Naive thymus-derived CD4-positive, alpha-beta T cell (primary cell): ENCODE measurements at regions of chr3 and their contacts with region 1.

Region 1: GRCh38 chr3:113745273-113746068 is 578 bp downstream of the NAA50 start:
- DNase-seq: peak; percentile 59 to 89 (median 83)
- ATAC-seq: peak; percentile 81
- H3K4me3 ChIP-seq: peak overlapping the region; percentile 90
- H3K4me3 Mint-ChIP-seq: peak overlapping the region; percentile 92 to 100 (median 96)
- H3K27ac ChIP-seq: peak overlapping the region; percentile 99
- H3K27ac Mint-ChIP-seq: peak overlapping the region; percentile 96 to 100 (median 100)
- H3K4me1 ChIP-seq: peaks cover 25 to 43% of the 10 kb centered on the region in 2 donors
- H3K4me1 Mint-ChIP-seq: peaks cover 47 to 81% (median 72%) of the 10 kb centered on the region in 7 donors
- H3K27me3 ChIP-seq: no peaks in the 10 kb centered on the region
- H3K27me3 Mint-ChIP-seq: no peaks in the 10 kb centered on the region

Region 2: GRCh38 chr3:112555535-112556170 is 1189.8 kb before region 1 on chr3:
- CTCF ChIA-PET with region 1: no interaction called
- POLR2A ChIA-PET with region 1: no interaction called
- intact Hi-C with region 1: no loop called
- DNase-seq: no peak
- ATAC-seq: peak; percentile 54
- H3K4me3 ChIP-seq: no peak overlapping the region
- H3K4me3 Mint-ChIP-seq: peak overlapping the region in 4 of 10 donors; percentile 0 to 41 (median 16)
- H3K27ac ChIP-seq: no peak overlapping the region
- H3K27ac Mint-ChIP-seq: peak overlapping the region in 3 of 9 donors; percentile 32 to 52 (median 44)
- H3K4me1 ChIP-seq: peaks cover 8 to 13% of the 10 kb centered on the region in 2 donors
- H3K4me1 Mint-ChIP-seq: peaks cover 39 to 75% (median 68%) of the 10 kb centered on the region in 7 donors
- H3K27me3 ChIP-seq: no peaks in the 10 kb centered on the region
- H3K27me3 Mint-ChIP-seq: no peaks in the 10 kb centered on the region

Region 3: GRCh38 chr3:113051302-113051711 is 694.2 kb before region 1 on chr3:
- CTCF ChIA-PET with region 1: no interaction called
- POLR2A ChIA-PET with region 1: no interaction called
- intact Hi-C with region 1: loop called (anchors 1 kb)
- DNase-seq: peak; percentile 65 to 86 (median 77)
- ATAC-seq: peak; percentile 99
- H3K4me3 ChIP-seq: no peak overlapping the region
- H3K4me3 Mint-ChIP-seq: no peak overlapping the region
- H3K27ac ChIP-seq: no peak overlapping the region
- H3K27ac Mint-ChIP-seq: no peak overlapping the region
- H3K4me1 ChIP-seq: peaks cover 0 to 4% of the 10 kb centered on the region in 2 donors
- H3K4me1 Mint-ChIP-seq: peaks cover 0 to 18% (median 14%) of the 10 kb centered on the region in 7 donors
- H3K27me3 ChIP-seq: no peaks in the 10 kb centered on the region
- H3K27me3 Mint-ChIP-seq: no peaks in the 10 kb centered on the region

Region 4: GRCh38 chr3:113531826-113532697 is 213.4 kb before region 1 on chr3 and contains the start of gene SIDT1:
- CTCF ChIA-PET with region 1: interaction called, 3 read pairs
- POLR2A ChIA-PET with region 1: interaction called, 9 read pairs
- intact Hi-C with region 1: loop called (anchors 1 kb)
- DNase-seq: peak; percentile 31 to 87 (median 78)
- ATAC-seq: peak; percentile 87
- H3K4me3 ChIP-seq: peak within 1 kb of the TSS; percentile 96
- H3K4me3 Mint-ChIP-seq: peak within 1 kb of the TSS; percentile 92 to 100 (median 98)
- H3K27ac ChIP-seq: peak within 1 kb of the TSS; percentile 95
- H3K27ac Mint-ChIP-seq: peak within 1 kb of the TSS; percentile 97 to 100 (median 99)
- H3K4me1 ChIP-seq: peaks cover 28 to 40% of the 10 kb centered on the region in 2 donors
- H3K4me1 Mint-ChIP-seq: peaks cover 33 to 69% (median 57%) of the 10 kb centered on the region in 7 donors
- H3K27me3 ChIP-seq: no peaks in the 10 kb centered on the region
- H3K27me3 Mint-ChIP-seq: peaks cover 0 to 16% (median 0%) of the 10 kb centered on the region in 5 donors
- total RNA-seq, gene SIDT1: 32.1 to 65.7 (median 60.7) TPM

Region 5: DNA sequence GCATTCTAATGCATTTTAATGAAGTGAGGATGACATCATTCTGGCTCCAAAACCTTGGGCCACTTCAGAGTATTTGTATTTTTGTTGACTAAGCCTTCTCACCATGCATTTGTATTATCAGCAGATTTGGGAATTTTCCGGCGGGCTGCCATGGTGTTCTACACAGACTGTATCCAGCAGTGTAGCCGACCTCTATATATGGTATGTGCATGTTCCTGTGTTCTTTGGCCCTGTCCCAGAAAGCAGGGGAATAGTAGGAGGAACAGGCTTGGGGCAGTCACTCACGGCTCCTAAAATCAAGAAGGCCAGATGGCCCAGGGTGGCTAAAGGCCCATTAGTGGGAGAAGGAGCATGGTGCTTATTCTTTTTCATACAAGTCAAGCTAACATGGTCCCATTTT is 129.5 kb before region 1 on chr3:
- CTCF ChIA-PET with region 1: no interaction called
- POLR2A ChIA-PET with region 1: no interaction called
- intact Hi-C with region 1: no loop called
- DNase-seq: no peak
- ATAC-seq: no peak
- H3K4me3 ChIP-seq: no peak overlapping the region
- H3K4me3 Mint-ChIP-seq: no peak overlapping the region
- H3K27ac ChIP-seq: no peak overlapping the region
- H3K27ac Mint-ChIP-seq: no peak overlapping the region
- H3K4me1 ChIP-seq: no peaks in the 10 kb centered on the region
- H3K4me1 Mint-ChIP-seq: peaks cover 0 to 2% (median 0%) of the 10 kb centered on the region in 7 donors
- H3K27me3 ChIP-seq: no peaks in the 10 kb centered on the region
- H3K27me3 Mint-ChIP-seq: no peaks in the 10 kb centered on the region

Region 6: DNA sequence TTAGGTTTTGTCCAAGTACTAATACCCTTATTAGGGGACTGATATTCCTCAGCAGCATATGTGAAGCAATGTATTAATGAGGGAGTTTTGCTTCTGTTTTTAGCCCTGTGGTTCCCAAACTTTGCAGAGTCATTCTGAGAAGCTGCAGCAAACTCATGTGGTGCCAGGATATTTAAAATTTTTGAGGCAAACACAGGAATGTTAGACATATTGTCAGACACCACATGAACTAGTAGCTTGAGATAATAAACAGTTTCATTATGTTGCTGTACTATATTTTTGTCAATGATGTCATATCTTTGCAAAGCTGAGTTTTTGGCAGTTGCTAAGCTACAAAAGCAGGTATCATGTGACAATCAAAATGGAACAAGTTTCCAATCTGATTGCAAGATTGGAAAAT is 38.0 kb after region 1 on chr3:
- CTCF ChIA-PET with region 1: no interaction called
- POLR2A ChIA-PET with region 1: interaction called, 3 read pairs
- intact Hi-C with region 1: loop called (anchors 1 to 5 kb)
- DNase-seq: peak in 1 of 9 donors; percentile 3
- ATAC-seq: peak; percentile 27
- H3K4me3 ChIP-seq: no peak overlapping the region
- H3K4me3 Mint-ChIP-seq: no peak overlapping the region
- H3K27ac ChIP-seq: no peak overlapping the region
- H3K27ac Mint-ChIP-seq: no peak overlapping the region
- H3K4me1 ChIP-seq: no peaks in the 10 kb centered on the region
- H3K4me1 Mint-ChIP-seq: peaks cover 0 to 10% (median 2%) of the 10 kb centered on the region in 7 donors
- H3K27me3 ChIP-seq: no peaks in the 10 kb centered on the region
- H3K27me3 Mint-ChIP-seq: no peaks in the 10 kb centered on the region

Region 7: DNA sequence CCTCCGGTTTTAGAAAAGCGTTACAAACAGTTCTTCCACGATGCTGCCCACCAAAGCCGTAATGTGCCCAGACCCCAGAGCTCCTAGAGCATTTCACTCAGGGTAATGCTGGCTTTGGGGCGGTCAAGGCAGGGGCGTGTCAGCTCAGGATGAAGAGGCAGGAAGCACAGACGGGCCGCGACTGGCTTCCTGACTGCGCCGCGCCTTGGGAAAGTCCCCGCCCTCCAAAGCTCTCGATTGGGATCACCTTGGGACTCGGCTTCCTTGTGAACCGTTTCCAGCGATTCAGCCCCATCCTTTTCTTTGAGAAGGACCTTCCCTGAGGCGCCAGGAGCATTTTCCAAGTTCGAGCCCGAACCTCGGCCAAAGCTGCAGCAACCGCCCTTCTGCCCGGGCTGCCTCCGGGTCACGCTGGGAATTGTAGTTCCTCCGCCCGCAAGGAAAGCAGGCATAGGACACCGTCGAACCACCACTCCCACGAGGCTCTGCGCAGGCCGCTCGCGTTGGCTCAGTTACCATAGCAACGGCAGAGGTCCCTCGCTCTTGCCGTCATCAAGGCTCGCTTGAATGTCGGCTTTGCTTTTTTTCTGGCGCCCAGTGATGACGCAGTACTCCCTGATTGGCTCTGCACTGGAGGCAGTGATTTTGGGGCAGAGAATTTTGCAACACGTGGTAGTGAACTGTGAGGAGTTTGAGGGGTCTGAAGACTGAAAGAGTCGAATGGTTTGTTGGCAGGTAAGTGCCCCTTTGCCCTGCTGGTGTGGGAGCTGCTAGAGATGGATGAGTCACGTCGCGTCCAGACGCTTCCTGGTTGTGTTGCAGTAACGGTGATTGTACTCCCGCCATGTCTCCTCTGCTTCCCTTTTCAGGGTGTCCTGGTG is 310.9 kb after region 1 on chr3 and contains the starts of genes CCDC191 and QTRT2:
- CTCF ChIA-PET with region 1: no interaction called
- POLR2A ChIA-PET with region 1: interaction called, 3 read pairs
- intact Hi-C with region 1: loop called (anchors 1 kb)
- DNase-seq: peak; percentile 82 to 99 (median 98)
- ATAC-seq: peak; percentile 97
- H3K4me3 ChIP-seq: peak within 1 kb of the TSS; percentile 95
- H3K4me3 Mint-ChIP-seq: peak within 1 kb of the TSS; percentile 91 to 100 (median 98)
- H3K27ac ChIP-seq: peak within 1 kb of the TSS; percentile 91
- H3K27ac Mint-ChIP-seq: peak within 1 kb of the TSS; percentile 87 to 99 (median 97)
- H3K4me1 ChIP-seq: peaks cover 10 to 12% of the 10 kb centered on the region in 2 donors
- H3K4me1 Mint-ChIP-seq: peaks cover 24 to 60% (median 55%) of the 10 kb centered on the region in 7 donors
- H3K27me3 ChIP-seq: no peaks in the 10 kb centered on the region
- H3K27me3 Mint-ChIP-seq: peaks cover 0 to 2% (median 0%) of the 10 kb centered on the region in 5 donors
- total RNA-seq, gene CCDC191: 3.9 to 8.8 (median 5.1) TPM
- total RNA-seq, gene QTRT2: 29.9 to 38.8 (median 33.8) TPM